ENCODE measurements at regions of chr3 and their contacts with region 1.

Region 1: DNA sequence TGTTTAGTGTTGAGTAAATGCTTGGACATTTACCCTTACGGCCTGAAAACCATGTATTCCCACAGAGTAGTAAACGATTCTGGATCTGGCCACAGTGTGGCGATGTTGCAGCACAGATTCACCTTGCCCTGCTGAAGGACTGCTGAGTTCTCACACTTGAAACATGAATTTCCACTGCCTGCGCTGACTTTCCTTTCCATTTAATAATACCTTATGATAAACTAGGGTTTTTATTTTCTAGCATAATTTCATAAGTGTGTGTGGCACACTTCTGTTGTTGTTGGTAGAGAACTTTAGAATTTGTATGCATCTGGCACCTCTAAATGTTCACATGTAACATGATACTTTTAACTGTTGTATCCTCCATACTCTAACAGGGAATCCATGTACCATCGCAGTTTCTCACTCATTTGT is 53.9 kb downstream of the C3orf38 start:
- DNase-seq: peak in 5 of 6 donors; percentile 26 to 77 (median 57)
- ATAC-seq: peak; percentile 86 to 99 (median 97)
- H3K4me3 ChIP-seq: no peak overlapping the region
- H3K27ac ChIP-seq: no peak overlapping the region
- H3K4me1 ChIP-seq: no peaks in the 10 kb centered on the region
- H3K27me3 ChIP-seq: no peaks in the 10 kb centered on the region
- CTCF ChIP-seq: peak; percentile 53 to 80 (median 68)

Region 2: DNA sequence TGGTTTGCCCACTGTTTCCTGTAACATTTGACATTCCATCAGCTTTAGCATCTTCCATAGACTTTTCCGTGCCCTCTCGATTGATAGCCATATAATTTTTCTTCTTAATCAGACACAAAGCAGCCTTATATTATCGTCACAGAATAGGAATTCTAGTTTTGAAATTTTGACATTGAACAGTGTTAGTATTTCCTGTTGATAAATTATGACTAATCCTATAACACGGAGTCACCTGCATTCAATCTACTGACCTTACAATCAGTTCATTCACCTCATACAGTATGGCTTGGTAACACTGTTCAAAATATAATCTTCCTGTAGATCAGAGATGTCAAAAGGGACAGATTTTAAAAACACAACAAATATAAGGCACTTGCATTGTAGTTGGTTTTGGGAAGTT is 369.8 kb after region 1 on chr3:
- intact Hi-C with region 1: no loop called
- DNase-seq: no peak
- ATAC-seq: no peak
- H3K4me3 ChIP-seq: no peak overlapping the region
- H3K27ac ChIP-seq: no peak overlapping the region
- H3K4me1 ChIP-seq: no peaks in the 10 kb centered on the region
- H3K27me3 ChIP-seq: no peaks in the 10 kb centered on the region
- CTCF ChIP-seq: no peak

Region 3: GRCh38 chr3:89107461-89108290 is 904.0 kb after region 1 on chr3 and contains the start of gene EPHA3:
- intact Hi-C with region 1: loop called in 1 of 3 experiments (anchors 10 kb)
- DNase-seq: peak; percentile 35 to 79 (median 64)
- ATAC-seq: peak; percentile 73 to 98 (median 94)
- H3K4me3 ChIP-seq: peak within 1 kb of the TSS in 2 of 4 donors; percentile 5 to 17
- H3K27ac ChIP-seq: no peak within 1 kb of the TSS
- H3K4me1 ChIP-seq: peaks cover 0 to 5% (median 0%) of the 10 kb centered on the region in 3 donors
- H3K27me3 ChIP-seq: peaks cover 0 to 58% (median 19%) of the 10 kb centered on the region in 4 donors
- CTCF ChIP-seq: no peak
- total RNA-seq, gene EPHA3: 0.43 to 7.7 (median 1.0) TPM